ENCODE measurements at regions of chr17 and their contacts with region 1.

Region 1: DNA sequence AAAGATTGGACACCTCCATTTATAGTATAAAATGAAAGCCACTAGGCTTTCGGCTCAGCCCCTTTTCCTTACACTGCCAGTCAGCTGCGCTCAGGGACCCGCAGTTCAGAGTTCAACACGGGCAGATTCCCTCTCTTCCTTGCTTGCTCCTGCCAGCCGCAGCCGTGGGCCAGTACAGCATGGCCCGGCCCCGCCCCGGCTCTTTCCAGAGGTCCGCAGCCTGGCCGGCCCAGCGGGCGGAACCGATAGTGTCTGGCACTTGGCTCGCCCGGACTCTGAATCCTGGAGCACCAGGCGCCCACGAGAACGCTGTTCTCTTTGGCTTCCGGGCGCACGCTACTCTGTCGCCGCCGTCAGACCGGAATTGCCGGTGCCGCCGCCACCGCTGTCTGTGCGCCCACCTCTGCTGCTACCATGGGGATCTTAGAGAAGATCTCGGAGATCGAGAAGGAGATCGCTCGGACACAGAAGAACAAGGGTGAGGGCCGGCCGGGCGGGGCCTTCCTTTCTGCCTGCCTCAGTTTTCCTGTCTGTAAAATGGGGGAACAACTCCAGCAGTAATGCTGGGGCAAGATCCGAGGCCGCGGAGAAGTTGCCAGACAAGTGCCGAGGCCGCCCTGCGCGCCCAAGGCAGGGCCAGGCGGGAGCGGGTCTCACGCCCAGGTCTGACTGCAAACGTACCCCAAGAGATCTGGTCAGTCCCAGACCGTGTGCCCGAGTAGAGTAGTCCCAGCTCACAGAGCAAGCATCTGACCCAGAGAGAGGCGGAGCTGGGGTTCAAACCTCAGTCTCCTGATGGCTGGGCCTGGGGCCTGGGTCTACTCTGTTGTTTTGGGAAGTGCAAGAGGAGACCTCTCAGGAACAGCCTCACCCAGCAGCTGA is at the start of gene DRG2:
- DNase-seq: peak; percentile 81 to 92 (median 85)
- ATAC-seq: peak; percentile 98
- H3K4me3 ChIP-seq: peak within 1 kb of the TSS; percentile 67
- H3K27ac ChIP-seq: peak within 1 kb of the TSS; percentile 83
- H3K4me1 ChIP-seq: peaks cover 3 to 13% of the 10 kb centered on the region in 2 experiments; a peak in 4 of 5 replicates
- H3K27me3 ChIP-seq: no peaks in the 10 kb centered on the region
- CTCF ChIP-seq: peak in 2 of 3 experiments; percentile 24 to 25; a peak in 2 of 6 replicates
- EP300 ChIP-seq: 0 out of 2 replicates have a peak, but pooled peaks have one; percentile 40
- POLR2A ChIP-seq: peak; percentile 86
- RAD21 ChIP-seq: peak; percentile 10 to 33; a peak in 1 of 4 replicates
- polyA plus RNA-seq, gene DRG2: 6.6 to 16.4 TPM

Region 2: DNA sequence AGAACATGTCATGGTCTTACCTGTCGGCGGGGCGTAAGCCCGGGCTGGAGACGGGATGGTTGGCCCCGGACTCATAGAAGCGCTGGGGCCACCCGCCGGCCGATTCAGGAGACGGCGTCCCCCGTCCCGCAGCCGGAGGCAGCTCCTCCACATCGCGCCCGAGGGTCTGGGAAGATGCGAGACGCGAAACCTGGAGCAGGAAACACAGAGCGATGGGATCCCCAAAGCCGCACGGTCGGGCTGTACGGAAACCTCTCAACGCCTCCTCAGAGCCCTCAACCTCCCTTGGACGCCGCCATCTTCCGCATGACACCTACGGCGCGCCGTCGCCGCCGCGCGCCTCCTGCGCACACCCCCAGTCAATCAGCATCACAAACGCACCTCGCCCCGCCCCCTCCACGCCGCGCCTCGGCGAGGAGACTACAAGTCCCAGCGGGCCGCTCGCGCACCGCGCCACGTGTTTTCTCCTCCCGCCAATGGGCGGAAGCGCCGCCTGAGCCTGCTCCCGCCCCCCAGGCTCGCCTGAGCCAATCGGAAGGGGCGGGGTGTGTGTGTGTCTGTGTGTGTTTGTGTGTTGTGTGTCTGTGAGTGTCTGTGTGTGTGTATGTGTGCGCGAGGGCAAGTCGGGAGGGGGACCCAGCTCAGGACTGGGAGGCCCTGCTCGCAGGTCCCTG is 48.9 kb before region 1 on chr17 and contains the starts of genes ATPAF2 and GID4:
- CTCF ChIA-PET with region 1: no interaction called
- POLR2A ChIA-PET with region 1: interaction called, 3 read pairs
- in situ Hi-C with region 1: no loop called
- intact Hi-C with region 1: loop called (anchors 5 kb)
- DNase-seq: peak; percentile 93 to 99 (median 94)
- ATAC-seq: peak; percentile 94
- H3K4me3 ChIP-seq: peak within 1 kb of the TSS; percentile 72
- H3K27ac ChIP-seq: peak within 1 kb of the TSS; percentile 67
- H3K4me1 ChIP-seq: peaks cover 24 to 38% of the 10 kb centered on the region in 2 experiments; a peak in 4 of 5 replicates
- H3K27me3 ChIP-seq: no peaks in the 10 kb centered on the region
- CTCF ChIP-seq: 0 out of 6 replicates have a peak, but pooled peaks of 1 of the 3 experiments have one; percentile 3
- EP300 ChIP-seq: no peak
- POLR2A ChIP-seq: peak; percentile 60
- RAD21 ChIP-seq: no peak
- polyA plus RNA-seq, gene ATPAF2: 2.1 to 6.4 TPM
- polyA plus RNA-seq, gene GID4: 1.2 to 1.3 TPM

Measured in K562 (cell line).